ENCODE measurements at regions of chr16 and their contacts with region 1.

Region 1: GRCh38 chr16:6643080-6643686 is 689.5 kb upstream of the RBFOX1 start:
- DNase-seq: no peak
- ATAC-seq: no peak
- H3K4me3 ChIP-seq: no peak overlapping the region
- H3K27ac ChIP-seq: no peak overlapping the region
- H3K4me1 ChIP-seq: no peaks in the 10 kb centered on the region
- H3K27me3 ChIP-seq: peaks cover 0 to 28% (median 0%) of the 10 kb centered on the region in 9 donors
- CTCF ChIP-seq: peak; percentile 74 to 87 (median 82)
- POLR2A ChIP-seq: no peak

Region 2: GRCh38 chr16:5234295-5235050 is 1408.7 kb before region 1 on chr16:
- intact Hi-C with region 1: loop called in 7 of 10 experiments (anchors 5 to 10 kb)
- DNase-seq: no peak
- ATAC-seq: no peak
- H3K4me3 ChIP-seq: no peak overlapping the region
- H3K27ac ChIP-seq: no peak overlapping the region
- H3K4me1 ChIP-seq: no peaks in the 10 kb centered on the region
- H3K27me3 ChIP-seq: peaks cover 0 to 25% (median 0%) of the 10 kb centered on the region in 9 donors
- CTCF ChIP-seq: no peak
- POLR2A ChIP-seq: no peak

Region 3: DNA sequence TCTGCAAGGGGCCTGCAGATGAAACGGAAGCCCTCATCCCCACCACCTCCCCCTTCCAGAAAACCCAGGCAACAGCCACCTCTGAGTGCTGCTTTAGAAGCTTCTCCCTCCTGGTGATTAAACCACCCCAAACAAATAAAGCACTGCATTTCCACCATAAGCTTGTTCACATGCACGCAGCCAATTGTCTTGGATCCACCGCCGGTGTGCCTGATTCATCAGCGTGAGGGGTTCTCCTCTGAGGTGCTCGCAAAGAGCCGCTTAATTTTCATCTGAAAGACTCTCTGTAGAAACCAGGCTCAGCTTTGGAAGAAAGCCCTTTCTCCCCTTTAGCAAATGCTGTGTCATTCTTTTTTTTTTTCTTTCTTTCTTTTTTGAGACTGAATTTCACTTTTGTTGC is 1390.4 kb before region 1 on chr16:
- intact Hi-C with region 1: loop called in 1 of 10 experiments (anchors 10 kb)
- DNase-seq: no peak
- ATAC-seq: no peak
- H3K4me3 ChIP-seq: no peak overlapping the region
- H3K27ac ChIP-seq: no peak overlapping the region
- H3K4me1 ChIP-seq: no peaks in the 10 kb centered on the region
- H3K27me3 ChIP-seq: no peaks in the 10 kb centered on the region
- CTCF ChIP-seq: no peak
- POLR2A ChIP-seq: no peak

Region 4: GRCh38 chr16:5502467-5502869 is 1140.7 kb before region 1 on chr16:
- intact Hi-C with region 1: loop called in 5 of 10 experiments (anchors 2 to 10 kb)
- DNase-seq: no peak
- ATAC-seq: no peak
- H3K4me3 ChIP-seq: no peak overlapping the region
- H3K27ac ChIP-seq: no peak overlapping the region
- H3K4me1 ChIP-seq: peaks cover 0 to 6% (median 0%) of the 10 kb centered on the region in 12 donors
- H3K27me3 ChIP-seq: peaks cover 0 to 10% (median 0%) of the 10 kb centered on the region in 9 donors
- CTCF ChIP-seq: peak in 7 of 12 donors; percentile 8 to 40 (median 22)
- POLR2A ChIP-seq: no peak

Region 5: GRCh38 chr16:5615868-5616642 is 1027.1 kb before region 1 on chr16:
- intact Hi-C with region 1: loop called in 1 of 10 experiments (anchors 10 kb)
- DNase-seq: peak; percentile 13 to 64 (median 38)
- ATAC-seq: peak in 3 of 4 donors; percentile 52 to 74 (median 57)
- H3K4me3 ChIP-seq: no peak overlapping the region
- H3K27ac ChIP-seq: no peak overlapping the region
- H3K4me1 ChIP-seq: no peaks in the 10 kb centered on the region
- H3K27me3 ChIP-seq: peaks cover 0 to 41% (median 8%) of the 10 kb centered on the region in 9 donors
- CTCF ChIP-seq: peak; percentile 35 to 68 (median 60)
- POLR2A ChIP-seq: no peak

Region 6: DNA sequence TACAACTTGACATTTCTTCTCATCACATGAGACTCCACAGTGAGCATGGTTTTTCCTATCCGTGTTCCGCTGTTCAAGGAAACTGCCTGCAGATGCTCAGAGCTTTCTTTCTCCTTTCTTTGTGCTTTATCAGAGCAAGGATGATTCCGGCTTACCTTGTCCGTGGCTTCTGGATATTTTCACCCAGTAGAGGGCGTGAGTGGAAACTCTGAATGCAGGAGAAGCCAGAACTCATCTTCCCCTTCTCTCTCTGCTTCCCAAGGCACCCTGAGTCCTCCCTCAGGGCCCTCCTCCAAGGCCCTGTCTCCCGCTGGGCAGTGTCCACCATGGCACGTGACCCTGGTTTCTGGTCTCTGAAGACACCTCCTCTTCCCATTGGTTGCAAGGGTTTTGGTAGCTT is 31.6 kb before region 1 on chr16:
- intact Hi-C with region 1: loop called in 1 of 10 experiments (anchors 2 kb)
- DNase-seq: no peak
- ATAC-seq: no peak
- H3K4me3 ChIP-seq: no peak overlapping the region
- H3K27ac ChIP-seq: no peak overlapping the region
- H3K4me1 ChIP-seq: no peaks in the 10 kb centered on the region
- H3K27me3 ChIP-seq: peaks cover 0 to 4% (median 0%) of the 10 kb centered on the region in 9 donors
- CTCF ChIP-seq: no peak
- POLR2A ChIP-seq: no peak

Region 7: GRCh38 chr16:6672507-6672906 is 29.3 kb after region 1 on chr16:
- intact Hi-C with region 1: no loop called
- DNase-seq: no peak
- ATAC-seq: no peak
- H3K4me3 ChIP-seq: no peak overlapping the region
- H3K27ac ChIP-seq: no peak overlapping the region
- H3K4me1 ChIP-seq: no peaks in the 10 kb centered on the region
- H3K27me3 ChIP-seq: no peaks in the 10 kb centered on the region
- CTCF ChIP-seq: no peak
- POLR2A ChIP-seq: no peak